Ovary (tissue), 10 donors: ENCODE measurements at regions of chr3 and their contacts with region 1.

Region 1: GRCh38 chr3:168077091-168077490 is 18.6 kb downstream of the GOLIM4 start:
- DNase-seq: no peak
- H3K4me3 ChIP-seq: no peak overlapping the region
- H3K27ac ChIP-seq: no peak overlapping the region
- H3K4me1 ChIP-seq: peaks cover 2% of the 10 kb centered on the region
- H3K27me3 ChIP-seq: peaks cover 2% of the 10 kb centered on the region
- CTCF ChIP-seq: no peak
- EP300 ChIP-seq: no peak
- POLR2A ChIP-seq: no peak

Region 2: GRCh38 chr3:167166594-167167253 is 910.4 kb before region 1 on chr3:
- intact Hi-C with region 1: loop called in 1 of 4 experiments (anchors 5 kb)
- DNase-seq: no peak
- H3K4me3 ChIP-seq: no peak overlapping the region
- H3K27ac ChIP-seq: no peak overlapping the region
- H3K4me1 ChIP-seq: no peaks in the 10 kb centered on the region
- H3K27me3 ChIP-seq: no peaks in the 10 kb centered on the region
- CTCF ChIP-seq: no peak
- EP300 ChIP-seq: no peak
- POLR2A ChIP-seq: no peak

Region 3: DNA sequence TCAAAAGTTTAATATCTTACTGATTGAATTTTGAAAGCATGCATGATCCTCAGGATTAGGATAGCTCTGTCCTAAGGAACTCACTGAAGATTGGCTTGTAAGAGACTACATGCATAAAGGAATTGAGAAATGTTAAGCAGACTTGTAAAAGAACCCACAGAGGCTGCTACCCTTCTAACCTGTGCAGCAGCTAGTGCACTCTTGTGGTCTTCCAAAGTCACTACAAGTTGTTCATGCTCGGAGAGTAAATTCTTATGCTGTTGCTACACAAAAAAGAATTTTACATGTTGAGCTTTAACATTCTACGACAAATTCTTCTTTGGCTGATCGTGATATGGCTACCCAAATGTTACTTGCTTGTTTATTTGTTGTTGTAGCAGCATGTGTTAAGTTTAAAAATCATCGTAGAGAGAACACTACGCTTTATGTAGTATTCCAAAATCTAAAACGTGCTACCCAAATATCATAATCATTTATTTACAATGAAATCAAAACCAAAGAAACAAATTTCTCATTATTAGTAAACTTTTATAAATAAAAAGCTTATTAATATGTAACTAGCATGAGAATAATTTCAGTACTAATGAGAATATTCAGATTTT is 36.4 kb before region 1 on chr3:
- intact Hi-C with region 1: no loop called
- DNase-seq: no peak
- H3K4me3 ChIP-seq: no peak overlapping the region
- H3K27ac ChIP-seq: no peak overlapping the region
- H3K4me1 ChIP-seq: no peaks in the 10 kb centered on the region
- H3K27me3 ChIP-seq: no peaks in the 10 kb centered on the region
- CTCF ChIP-seq: no peak
- EP300 ChIP-seq: no peak
- POLR2A ChIP-seq: no peak